Panc1 (cell line): ENCODE measurements at regions of chr14 and their contacts with region 1.

Region 1: DNA sequence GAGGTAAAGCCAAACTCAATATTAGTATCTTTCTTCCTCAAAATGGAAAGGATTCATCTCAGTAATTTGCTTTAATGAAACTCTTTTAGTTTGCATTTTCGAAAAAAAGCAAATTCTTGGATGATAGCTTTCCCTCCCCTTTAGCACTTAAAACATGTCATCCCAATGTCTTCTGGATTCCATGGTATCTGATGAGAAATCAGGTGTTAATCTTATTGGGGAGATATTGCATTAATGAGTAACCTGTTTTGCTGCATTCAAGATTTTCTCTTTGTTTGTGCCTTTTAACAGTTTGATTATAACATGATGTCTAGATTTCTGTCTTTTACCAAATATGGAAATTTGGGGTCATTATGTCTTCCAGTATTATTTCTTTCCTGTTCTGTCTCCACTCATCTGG is 405.1 kb upstream of the FOXG1 start:
- DNase-seq: no peak
- ATAC-seq: no peak
- H3K4me3 ChIP-seq: no peak overlapping the region
- H3K27ac ChIP-seq: no peak overlapping the region
- H3K4me1 ChIP-seq: no peaks in the 10 kb centered on the region
- H3K27me3 ChIP-seq: no peaks in the 10 kb centered on the region
- CTCF ChIP-seq: no peak

Region 2: DNA sequence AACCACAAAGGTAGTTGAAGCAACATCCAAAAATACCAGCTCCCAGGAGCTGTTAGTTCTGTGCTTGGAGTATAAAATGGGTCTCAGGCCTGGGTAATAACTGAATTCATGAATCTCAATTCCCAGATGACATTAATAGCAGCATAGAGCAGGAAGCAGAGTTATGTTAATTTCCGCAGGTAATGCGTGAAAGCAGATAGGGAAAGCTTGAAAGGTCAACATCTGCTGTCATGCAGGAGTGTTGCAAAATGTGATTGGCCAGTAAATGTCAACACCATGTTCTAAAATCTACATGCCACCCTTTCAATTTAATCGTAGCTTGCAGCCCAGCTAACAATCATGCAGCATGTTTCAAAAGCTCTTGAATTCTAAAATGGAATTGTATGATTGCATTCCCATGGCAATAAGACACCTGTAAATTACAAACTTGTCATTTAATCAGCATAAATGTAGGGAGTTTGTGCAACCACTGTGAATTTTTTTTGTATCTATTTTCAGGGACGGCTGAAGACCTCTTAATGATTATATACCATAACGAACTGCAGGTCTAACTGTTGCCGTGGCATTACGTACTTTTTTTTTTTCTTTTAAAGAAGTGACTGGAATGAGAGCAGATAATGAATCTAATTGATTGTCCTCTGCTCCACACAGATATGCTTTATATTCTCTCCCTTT is 230.7 kb before region 1 on chr14:
- CTCF ChIA-PET with region 1: no interaction called
- POLR2A ChIA-PET with region 1: interaction called, 13 read pairs
- in situ Hi-C with region 1: no loop called
- intact Hi-C with region 1: no loop called
- DNase-seq: no peak
- ATAC-seq: no peak
- H3K4me3 ChIP-seq: no peak overlapping the region
- H3K27ac ChIP-seq: no peak overlapping the region
- H3K4me1 ChIP-seq: no peaks in the 10 kb centered on the region
- H3K27me3 ChIP-seq: no peaks in the 10 kb centered on the region
- CTCF ChIP-seq: no peak

Region 3: DNA sequence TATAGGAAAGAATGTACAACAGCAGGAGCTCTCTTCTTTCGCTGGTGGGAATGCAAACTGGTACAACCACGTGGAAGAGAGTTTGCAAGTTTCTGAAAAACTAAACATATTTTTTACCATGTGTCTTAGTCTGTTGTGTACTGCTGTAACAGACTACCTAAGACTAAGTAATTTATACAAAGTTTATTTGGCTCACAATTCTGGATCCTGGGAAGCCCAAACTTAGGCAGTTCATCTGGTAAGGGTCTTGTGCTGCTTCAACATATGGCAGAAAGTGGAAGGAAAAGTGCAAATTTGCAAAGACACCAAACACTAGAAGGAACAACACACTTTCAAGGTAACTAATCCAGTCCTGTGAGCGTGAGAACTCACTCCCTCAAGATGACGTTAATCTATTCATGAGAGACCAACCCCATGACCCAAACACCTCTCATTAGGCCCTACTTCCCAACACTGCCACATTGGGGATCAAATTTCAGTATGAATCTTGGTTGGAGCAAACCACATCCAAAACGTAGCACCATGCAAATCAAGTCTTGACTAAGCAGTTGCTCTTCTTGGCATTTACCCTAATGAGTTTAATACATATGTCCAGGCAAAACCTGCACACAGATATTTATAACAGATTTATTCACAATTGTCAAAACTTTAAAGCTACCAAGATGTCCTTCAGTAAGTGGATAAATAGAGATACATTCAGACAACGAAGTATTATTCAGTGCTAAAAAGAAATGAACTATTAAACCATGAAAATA is 76.8 kb before region 1 on chr14:
- CTCF ChIA-PET with region 1: no interaction called
- POLR2A ChIA-PET with region 1: no interaction called
- in situ Hi-C with region 1: no loop called
- intact Hi-C with region 1: no loop called
- DNase-seq: no peak
- ATAC-seq: no peak
- H3K4me3 ChIP-seq: no peak overlapping the region
- H3K27ac ChIP-seq: no peak overlapping the region
- H3K4me1 ChIP-seq: no peaks in the 10 kb centered on the region
- H3K27me3 ChIP-seq: no peaks in the 10 kb centered on the region
- CTCF ChIP-seq: no peak